ENCODE measurements at regions of chr5 and their contacts with region 1.

Region 1: GRCh38 chr5:159965031-159965837 is 43.7 kb upstream of the TTC1 start:
- H3K4me3 Mint-ChIP-seq: no peak overlapping the region
- H3K27ac Mint-ChIP-seq: no peak overlapping the region
- H3K4me1 Mint-ChIP-seq: peaks cover 5% of the 10 kb centered on the region
- H3K27me3 Mint-ChIP-seq: peaks cover 30% of the 10 kb centered on the region

Region 2: DNA sequence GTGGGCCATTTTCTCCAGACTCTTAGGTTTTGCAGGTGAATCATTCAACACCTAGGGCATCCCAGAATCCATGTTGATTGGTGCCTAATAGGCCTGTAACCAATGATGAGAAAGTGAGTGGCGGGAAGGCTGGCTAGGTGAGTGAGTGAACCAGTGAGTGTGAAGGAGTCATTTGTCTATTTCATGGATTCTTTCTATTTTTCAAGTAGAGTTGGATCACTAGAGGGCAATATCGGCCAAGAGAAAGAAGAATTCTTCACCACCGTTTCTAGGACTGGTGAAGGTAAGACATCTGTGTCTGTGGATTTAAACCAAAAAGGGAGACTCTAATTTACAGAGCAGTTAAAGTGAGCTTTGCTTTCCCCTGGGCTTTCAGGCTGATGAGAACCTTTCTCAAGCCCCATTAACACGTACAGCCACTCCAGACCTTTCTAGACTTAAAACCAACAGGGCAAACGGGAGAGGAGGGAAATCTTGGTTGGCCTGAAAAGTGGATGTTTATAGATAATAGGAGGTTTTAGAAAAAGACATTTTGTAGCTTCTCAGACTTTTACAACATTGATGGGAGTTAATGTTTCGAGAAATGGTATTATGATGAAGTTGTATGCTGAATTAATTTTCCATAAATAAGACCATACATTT is 520.7 kb before region 1 on chr5:
- intact Hi-C with region 1: loop called (anchors 10 kb)
- H3K4me3 Mint-ChIP-seq: no peak overlapping the region
- H3K27ac Mint-ChIP-seq: no peak overlapping the region
- H3K4me1 Mint-ChIP-seq: no peaks in the 10 kb centered on the region
- H3K27me3 Mint-ChIP-seq: peaks cover 2% of the 10 kb centered on the region

Region 3: DNA sequence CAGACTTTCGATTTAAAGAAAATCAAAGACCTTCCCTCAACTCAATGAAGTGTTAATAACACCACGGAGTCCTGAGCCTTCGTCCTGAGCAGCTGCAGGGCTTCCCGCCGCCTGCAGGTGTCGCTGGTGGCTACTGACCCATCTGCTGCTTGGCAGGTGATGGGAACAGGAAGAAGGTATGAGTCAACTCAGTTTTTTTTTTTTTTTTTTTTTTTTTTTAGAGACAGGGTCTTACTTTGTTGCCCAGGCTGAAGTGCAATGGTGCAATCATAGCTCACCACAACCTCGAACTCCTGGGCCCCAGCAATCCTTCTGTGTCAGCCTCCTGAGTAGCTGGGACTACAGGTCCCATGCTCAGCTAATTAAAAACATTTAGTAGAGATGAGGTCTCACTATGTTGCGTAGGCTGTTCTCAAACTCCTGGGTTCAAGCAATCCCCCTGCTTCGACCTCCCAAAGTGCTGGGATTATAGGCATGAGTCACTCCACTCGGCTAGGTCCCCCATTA is 449.3 kb before region 1 on chr5:
- intact Hi-C with region 1: loop called (anchors 10 kb)
- H3K4me3 Mint-ChIP-seq: no peak overlapping the region
- H3K27ac Mint-ChIP-seq: no peak overlapping the region
- H3K4me1 Mint-ChIP-seq: no peaks in the 10 kb centered on the region
- H3K27me3 Mint-ChIP-seq: peaks cover 8% of the 10 kb centered on the region

Region 4: GRCh38 chr5:160310910-160311295 is 345.7 kb after region 1 on chr5:
- intact Hi-C with region 1: no loop called
- H3K4me3 Mint-ChIP-seq: no peak overlapping the region
- H3K27ac Mint-ChIP-seq: no peak overlapping the region
- H3K4me1 Mint-ChIP-seq: peaks cover 19% of the 10 kb centered on the region
- H3K27me3 Mint-ChIP-seq: peaks cover 82% of the 10 kb centered on the region